CD4-positive, alpha-beta T cell (primary cell): ENCODE measurements at regions of chr12 and their contacts with region 1.

Region 1: GRCh38 chr12:109713187-109713984 is at the start of gene FAM222A:
- DNase-seq: peak; percentile 94 to 99 (median 98)
- ATAC-seq: peak; percentile 93
- H3K4me3 ChIP-seq: peak within 1 kb of the TSS; percentile 56
- H3K4me3 Mint-ChIP-seq: peak within 1 kb of the TSS; percentile 84
- H3K27ac ChIP-seq: no peak within 1 kb of the TSS
- H3K27ac Mint-ChIP-seq: peak within 1 kb of the TSS; percentile 30
- H3K4me1 ChIP-seq: peaks cover 9% of the 10 kb centered on the region
- H3K4me1 Mint-ChIP-seq: peaks cover 5% of the 10 kb centered on the region
- H3K27me3 ChIP-seq: peaks cover 13 to 39% of the 10 kb centered on the region in 2 experiments
- H3K27me3 Mint-ChIP-seq: peaks cover 71% of the 10 kb centered on the region
- CTCF ChIP-seq: no peak
- total RNA-seq, gene FAM222A: 1.1 to 1.7 TPM

Region 2: DNA sequence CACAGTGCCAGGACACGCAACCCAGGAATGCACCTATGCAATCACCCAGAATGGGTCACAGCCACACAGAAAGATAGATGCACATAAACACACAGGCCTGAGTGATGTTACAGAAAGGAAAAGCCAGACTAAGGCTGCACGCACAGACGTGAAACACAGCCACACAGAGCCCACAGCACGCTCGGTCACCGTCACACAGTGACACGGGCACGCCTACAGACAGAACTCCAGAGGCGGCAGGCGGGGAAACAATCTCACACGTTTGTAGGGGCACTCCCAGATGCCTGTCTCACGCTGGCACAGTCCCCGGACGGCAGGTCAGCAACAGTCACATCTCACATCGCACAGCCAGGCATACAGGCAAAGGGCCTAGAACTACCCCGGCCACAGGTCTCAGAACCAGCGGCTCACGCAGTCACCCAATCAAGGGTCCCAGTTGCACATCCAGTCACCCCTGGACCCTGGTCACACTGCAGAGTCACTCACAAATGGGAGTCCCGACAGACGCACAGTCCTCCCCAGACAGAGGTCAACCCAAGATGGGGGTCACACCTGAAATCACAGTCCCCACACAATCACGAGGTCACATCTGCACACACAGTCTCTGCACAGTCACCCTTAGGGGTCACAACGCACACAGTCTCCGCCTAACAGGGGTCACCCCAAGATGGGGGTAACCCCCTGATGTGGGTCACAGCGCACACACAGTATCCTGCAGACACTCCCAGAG is 856.8 kb before region 1 on chr12:
- CTCF ChIA-PET with region 1: no interaction called
- POLR2A ChIA-PET with region 1: no interaction called
- intact Hi-C with region 1: loop called in 1 of 2 experiments (anchors 10 kb)
- DNase-seq: peak in 13 of 14 experiments; percentile 35 to 92 (median 58)
- ATAC-seq: peak; percentile 75
- H3K4me3 ChIP-seq: peak overlapping the region; percentile 72
- H3K4me3 Mint-ChIP-seq: peak overlapping the region; percentile 95
- H3K27ac ChIP-seq: peak overlapping the region in 1 of 2 donors; percentile 22
- H3K27ac Mint-ChIP-seq: peak overlapping the region; percentile 90
- H3K4me1 ChIP-seq: peaks cover 36% of the 10 kb centered on the region
- H3K4me1 Mint-ChIP-seq: peaks cover 42% of the 10 kb centered on the region
- H3K27me3 ChIP-seq: no peaks in the 10 kb centered on the region
- H3K27me3 Mint-ChIP-seq: no peaks in the 10 kb centered on the region
- CTCF ChIP-seq: no peak

Region 3: DNA sequence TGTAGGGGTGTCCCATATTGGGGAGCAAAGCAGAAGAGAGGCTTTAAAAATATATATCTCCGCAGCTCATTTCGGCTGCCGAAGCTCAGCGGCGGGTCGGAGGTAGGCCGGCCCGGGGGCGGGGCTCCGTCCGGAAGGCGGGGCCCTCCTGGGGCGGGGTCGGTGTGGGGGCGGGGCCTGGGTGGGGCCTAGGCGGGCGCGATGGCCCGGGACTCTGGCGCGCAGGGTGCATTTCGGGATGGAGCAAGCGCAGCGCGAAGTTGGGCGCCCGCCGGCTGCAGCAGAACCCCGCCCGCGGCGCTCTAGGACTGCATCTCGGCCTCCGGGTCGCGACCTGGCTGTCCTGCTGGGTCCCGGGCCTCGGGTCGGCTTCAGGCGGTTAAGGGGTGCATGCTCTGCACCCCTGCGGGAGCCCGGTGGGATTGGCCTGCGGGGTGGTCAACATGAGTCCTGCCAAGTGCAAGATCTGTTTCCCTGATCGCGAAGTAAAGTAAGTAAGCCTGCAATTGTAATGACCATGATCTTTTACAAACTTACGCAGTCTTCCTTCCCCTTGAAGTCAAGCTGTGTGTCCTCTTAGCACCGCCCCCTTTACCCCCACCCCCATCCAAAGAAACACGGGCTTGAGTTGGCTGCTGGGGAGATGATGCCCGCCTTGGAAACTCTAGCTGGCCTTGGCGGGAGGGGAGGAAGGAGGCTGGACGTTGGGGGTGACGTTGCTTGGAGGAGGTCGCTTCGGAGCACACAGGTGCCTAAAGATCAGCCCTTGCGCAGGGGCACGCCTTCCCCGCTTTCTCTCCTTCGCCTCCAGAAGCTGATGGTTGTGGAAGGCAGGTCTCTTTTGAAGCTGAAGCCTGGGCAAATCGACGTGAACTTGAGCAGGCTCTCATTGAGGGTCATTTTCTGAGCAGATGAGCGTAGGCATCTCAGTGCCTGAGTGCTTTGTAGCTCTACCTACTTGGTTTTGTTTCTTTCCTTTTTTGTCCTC is 558.6 kb before region 1 on chr12:
- CTCF ChIA-PET with region 1: no interaction called
- POLR2A ChIA-PET with region 1: no interaction called
- intact Hi-C with region 1: loop called in 1 of 2 experiments (anchors 5 kb)
- DNase-seq: peak; percentile 71 to 90 (median 78)
- ATAC-seq: peak; percentile 95
- H3K4me3 ChIP-seq: peak overlapping the region; percentile 75
- H3K4me3 Mint-ChIP-seq: peak overlapping the region; percentile 96
- H3K27ac ChIP-seq: peak overlapping the region in 1 of 2 donors; percentile 17
- H3K27ac Mint-ChIP-seq: peak overlapping the region; percentile 93
- H3K4me1 ChIP-seq: peaks cover 16% of the 10 kb centered on the region
- H3K4me1 Mint-ChIP-seq: peaks cover 21% of the 10 kb centered on the region
- H3K27me3 ChIP-seq: no peaks in the 10 kb centered on the region
- H3K27me3 Mint-ChIP-seq: no peaks in the 10 kb centered on the region
- CTCF ChIP-seq: no peak

Region 4: DNA sequence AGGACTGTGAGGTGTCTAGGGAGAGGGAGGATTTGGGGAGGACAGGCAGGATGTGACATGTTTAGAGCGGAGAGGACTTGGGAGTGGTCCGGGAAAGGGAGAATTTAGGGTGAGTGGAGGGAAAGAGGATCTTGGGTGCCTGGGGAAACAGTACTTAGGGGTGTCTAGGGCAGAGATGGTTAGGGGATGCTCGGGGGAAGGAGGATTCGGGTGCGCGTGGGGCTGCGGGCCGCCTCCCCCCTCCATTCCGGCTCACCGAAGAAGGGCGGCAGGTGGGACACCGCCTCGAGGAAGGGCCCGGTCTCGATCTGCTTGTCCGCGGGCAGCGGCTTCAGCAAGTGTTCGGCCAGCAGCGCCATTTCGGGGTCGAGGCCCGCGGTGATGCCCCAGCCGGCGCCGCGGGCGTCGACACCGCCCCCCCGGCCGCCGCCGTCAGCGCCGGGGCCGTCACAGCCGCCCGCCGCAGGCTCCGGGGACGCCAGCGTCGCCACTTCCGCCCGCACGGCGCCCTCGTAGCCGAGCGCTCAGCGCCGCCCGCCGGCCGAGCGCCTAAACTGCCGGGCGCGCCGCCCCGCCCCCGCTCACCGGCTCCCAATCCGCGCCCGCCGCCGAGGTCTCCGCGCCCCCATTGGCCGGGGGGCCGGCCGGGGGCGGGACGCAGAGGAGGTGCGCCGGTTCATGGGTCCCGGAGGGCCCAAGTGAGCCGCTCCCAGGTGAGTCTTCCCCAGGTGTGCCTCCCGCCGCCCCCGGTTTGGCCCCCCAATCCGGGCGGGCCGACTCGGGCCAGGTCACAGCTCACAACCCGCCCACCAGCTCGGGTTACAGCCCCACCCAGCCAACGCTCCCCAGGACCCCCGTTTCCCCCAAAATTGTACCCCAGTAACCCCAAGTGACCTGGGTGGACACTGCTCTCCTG is 166.9 kb after region 1 on chr12 and contains the start of gene GLTP:
- CTCF ChIA-PET with region 1: no interaction called
- POLR2A ChIA-PET with region 1: no interaction called
- intact Hi-C with region 1: loop called in 1 of 2 experiments (anchors 1 kb)
- DNase-seq: peak; percentile 78 to 97 (median 88)
- ATAC-seq: peak; percentile 96
- H3K4me3 ChIP-seq: peak within 1 kb of the TSS; percentile 98
- H3K4me3 Mint-ChIP-seq: peak within 1 kb of the TSS; percentile 92
- H3K27ac ChIP-seq: peak within 1 kb of the TSS; percentile 81 to 85
- H3K27ac Mint-ChIP-seq: peak within 1 kb of the TSS; percentile 87
- H3K4me1 ChIP-seq: peaks cover 35% of the 10 kb centered on the region
- H3K4me1 Mint-ChIP-seq: peaks cover 54% of the 10 kb centered on the region
- H3K27me3 ChIP-seq: no peaks in the 10 kb centered on the region
- H3K27me3 Mint-ChIP-seq: no peaks in the 10 kb centered on the region
- CTCF ChIP-seq: no peak
- total RNA-seq, gene GLTP: 24.8 to 25.2 TPM

Region 5: DNA sequence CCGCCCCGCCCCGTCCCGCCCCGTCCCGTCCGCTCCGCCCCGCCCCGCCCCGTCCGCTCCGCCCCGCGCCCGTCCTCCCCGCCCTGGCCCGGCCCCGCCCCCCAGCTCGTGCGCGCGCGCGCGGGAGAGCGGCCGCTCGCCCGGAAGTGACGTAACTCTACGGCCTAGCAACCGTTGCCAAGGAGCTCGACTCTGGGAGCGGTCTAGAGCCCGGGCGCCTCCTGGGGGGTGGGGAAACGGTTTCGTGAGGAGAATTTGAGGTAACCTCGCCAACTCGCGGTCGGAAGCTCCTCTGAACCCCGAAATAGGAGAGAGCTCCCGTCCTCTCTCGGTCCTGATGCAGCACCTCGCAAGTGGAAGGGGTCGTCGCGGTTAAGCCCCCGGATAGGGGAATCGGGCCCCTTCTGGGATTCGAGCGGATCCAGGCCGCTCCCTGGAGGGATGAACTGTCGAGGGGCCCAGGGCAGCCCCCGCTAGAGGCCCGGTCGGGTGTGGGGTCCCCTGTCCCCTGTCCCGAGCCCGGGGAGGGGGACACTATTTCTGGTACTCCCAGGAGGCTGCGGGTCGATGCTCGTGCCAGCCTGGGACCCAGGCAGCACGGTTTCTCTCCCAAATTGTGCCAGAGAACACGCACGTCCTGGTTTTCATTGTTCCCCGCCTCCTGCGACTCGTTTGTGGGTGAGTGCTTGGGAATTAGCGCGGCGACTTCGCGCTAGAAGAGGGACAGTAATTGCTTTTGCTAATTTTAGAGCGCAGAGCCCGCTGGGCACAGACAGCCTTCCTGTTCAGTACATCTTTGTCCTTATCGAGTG is 411.0 kb after region 1 on chr12 and contains the start of gene IFT81:
- CTCF ChIA-PET with region 1: no interaction called
- POLR2A ChIA-PET with region 1: no interaction called
- intact Hi-C with region 1: loop called in 1 of 2 experiments (anchors 5 kb)
- DNase-seq: peak; percentile 94 to 99 (median 96)
- ATAC-seq: peak; percentile 89
- H3K4me3 ChIP-seq: peak within 1 kb of the TSS; percentile 98
- H3K4me3 Mint-ChIP-seq: peak within 1 kb of the TSS; percentile 92
- H3K27ac ChIP-seq: peak within 1 kb of the TSS; percentile 13 to 78
- H3K27ac Mint-ChIP-seq: peak within 1 kb of the TSS; percentile 63
- H3K4me1 ChIP-seq: peaks cover 12% of the 10 kb centered on the region
- H3K4me1 Mint-ChIP-seq: peaks cover 14% of the 10 kb centered on the region
- H3K27me3 ChIP-seq: no peaks in the 10 kb centered on the region
- H3K27me3 Mint-ChIP-seq: peaks cover 5% of the 10 kb centered on the region
- CTCF ChIP-seq: no peak
- total RNA-seq, gene IFT81: 0.41 to 1.1 TPM

Region 6: DNA sequence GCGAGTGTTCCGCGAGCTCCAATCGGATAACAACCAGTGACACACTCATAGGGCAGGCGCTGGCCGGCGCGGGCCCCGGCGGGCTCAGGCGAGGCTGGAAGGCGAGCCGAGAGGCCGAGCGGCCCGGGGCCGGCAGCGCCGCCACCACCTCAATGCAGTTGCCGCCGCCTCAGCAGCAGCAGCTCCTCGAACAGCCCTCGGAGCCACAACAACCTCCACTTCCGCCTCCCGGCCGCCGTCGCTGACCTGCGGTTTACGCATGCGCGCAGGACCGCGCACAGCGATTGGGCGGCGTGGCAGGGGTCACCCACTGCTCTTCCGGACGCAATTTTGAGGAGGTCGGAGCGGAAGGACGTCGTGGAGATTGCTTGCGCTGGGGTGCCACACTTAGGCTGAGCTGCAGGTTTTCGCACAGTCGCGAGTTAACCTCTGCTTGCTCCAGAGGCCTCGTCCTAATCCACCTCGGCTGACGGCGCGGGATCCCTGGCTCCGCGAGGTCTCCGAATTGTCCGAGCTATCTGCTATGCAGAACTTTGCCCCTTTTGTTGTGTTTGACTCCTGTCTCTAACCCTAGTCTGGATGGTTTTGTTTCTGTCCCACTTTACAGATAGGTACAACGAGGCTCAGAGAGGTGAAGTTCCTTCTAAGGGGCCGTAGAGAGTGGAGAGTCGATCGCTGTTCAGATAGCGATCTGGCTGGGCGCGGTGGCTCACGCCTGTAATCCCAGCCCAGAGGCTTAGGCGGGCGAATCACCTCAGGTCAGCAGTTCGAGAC is 1972.5 kb after region 1 on chr12 and contains the starts of genes ACAD10 and BRAP:
- CTCF ChIA-PET with region 1: no interaction called
- POLR2A ChIA-PET with region 1: no interaction called
- intact Hi-C with region 1: loop called in 1 of 2 experiments (anchors 5 kb)
- DNase-seq: peak; percentile 86 to 97 (median 92)
- ATAC-seq: peak; percentile 83
- H3K4me3 ChIP-seq: peak within 1 kb of the TSS; percentile 92
- H3K4me3 Mint-ChIP-seq: peak within 1 kb of the TSS; percentile 95
- H3K27ac ChIP-seq: peak within 1 kb of the TSS; percentile 46 to 76
- H3K27ac Mint-ChIP-seq: peak within 1 kb of the TSS; percentile 86
- H3K4me1 ChIP-seq: peaks cover 27% of the 10 kb centered on the region
- H3K4me1 Mint-ChIP-seq: peaks cover 46% of the 10 kb centered on the region
- H3K27me3 ChIP-seq: no peaks in the 10 kb centered on the region
- H3K27me3 Mint-ChIP-seq: no peaks in the 10 kb centered on the region
- CTCF ChIP-seq: no peak
- total RNA-seq, gene ACAD10: 15.8 to 17.4 TPM
- total RNA-seq, gene BRAP: 22.4 to 25.8 TPM